Endothelial cell of umbilical vein (primary cell): ENCODE measurements at regions of chr2 and their contacts with region 1.

Region 1: DNA sequence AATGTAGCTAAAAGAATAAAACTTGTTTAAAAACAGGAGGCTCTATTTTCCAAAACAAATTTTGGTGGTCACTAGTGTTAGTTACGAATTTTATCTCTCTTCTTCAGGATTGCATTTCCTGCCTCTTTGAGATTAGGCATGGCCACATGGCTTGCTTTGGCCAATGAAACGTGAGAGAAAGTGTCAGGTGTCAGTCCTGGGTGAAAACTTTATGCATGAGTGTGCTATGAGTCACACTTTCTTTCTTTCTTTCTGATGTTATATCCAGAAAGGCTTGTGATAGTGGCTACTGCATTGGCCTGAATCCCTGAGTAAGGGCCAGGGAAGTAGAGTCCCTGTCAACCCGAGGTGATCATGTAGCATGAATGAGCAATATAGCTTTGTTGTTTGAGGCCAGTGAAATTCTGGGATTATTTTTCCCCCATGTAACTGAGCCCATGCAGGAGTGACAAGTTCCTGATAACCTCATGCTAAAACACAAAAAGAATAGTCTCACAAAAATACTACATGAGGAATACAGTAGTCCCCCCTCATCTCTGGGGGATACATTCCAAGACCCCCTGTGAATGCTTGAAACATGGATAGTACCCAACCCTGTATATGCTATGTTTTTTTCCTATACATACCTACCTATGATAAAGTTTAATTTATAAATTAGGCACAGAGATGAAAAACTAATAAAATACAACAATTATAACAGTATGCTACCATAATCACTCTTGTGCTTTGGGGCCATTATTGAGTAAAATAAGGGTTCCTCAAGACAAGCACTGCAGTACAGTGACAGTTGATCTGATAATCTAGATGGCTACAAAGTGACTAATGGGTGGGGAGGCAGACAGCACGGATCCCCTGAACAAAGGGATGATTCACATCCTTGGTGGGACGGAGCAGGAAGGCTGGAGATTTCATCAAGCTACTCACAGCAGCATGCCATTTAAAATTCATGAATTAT is 109.5 kb downstream of the CDC42EP3 start:
- DNase-seq: peak; percentile 92
- H3K4me3 ChIP-seq: peak overlapping the region in 1 of 3 experiments; percentile 9
- H3K27ac ChIP-seq: peak overlapping the region; percentile 91
- H3K4me1 ChIP-seq: peaks cover 42% of the 10 kb centered on the region
- H3K27me3 ChIP-seq: no peaks in the 10 kb centered on the region
- CTCF ChIP-seq: no peak
- POLR2A ChIP-seq: no peak

Region 2: GRCh38 chr2:36568516-36569246 is 993.2 kb before region 1 on chr2:
- CTCF ChIA-PET with region 1: no interaction called
- POLR2A ChIA-PET with region 1: no interaction called
- dilution Hi-C with region 1: no loop called
- intact Hi-C with region 1: no loop called
- DNase-seq: peak; percentile 95
- H3K4me3 ChIP-seq: peak overlapping the region in 1 of 3 experiments; percentile 42
- H3K27ac ChIP-seq: peak overlapping the region; percentile 98
- H3K4me1 ChIP-seq: peaks cover 91% of the 10 kb centered on the region
- H3K27me3 ChIP-seq: no peaks in the 10 kb centered on the region
- CTCF ChIP-seq: no peak
- POLR2A ChIP-seq: peak; percentile 61

Region 3: GRCh38 chr2:37449761-37450296 is 112.1 kb before region 1 on chr2:
- CTCF ChIA-PET with region 1: no interaction called
- POLR2A ChIA-PET with region 1: interaction called, 11 read pairs
- dilution Hi-C with region 1: no loop called
- intact Hi-C with region 1: loop called (anchors 1 kb)
- DNase-seq: peak; percentile 67
- H3K4me3 ChIP-seq: no peak overlapping the region
- H3K27ac ChIP-seq: no peak overlapping the region
- H3K4me1 ChIP-seq: peaks cover 28% of the 10 kb centered on the region
- H3K27me3 ChIP-seq: no peaks in the 10 kb centered on the region
- CTCF ChIP-seq: no peak
- POLR2A ChIP-seq: no peak

Region 4: DNA sequence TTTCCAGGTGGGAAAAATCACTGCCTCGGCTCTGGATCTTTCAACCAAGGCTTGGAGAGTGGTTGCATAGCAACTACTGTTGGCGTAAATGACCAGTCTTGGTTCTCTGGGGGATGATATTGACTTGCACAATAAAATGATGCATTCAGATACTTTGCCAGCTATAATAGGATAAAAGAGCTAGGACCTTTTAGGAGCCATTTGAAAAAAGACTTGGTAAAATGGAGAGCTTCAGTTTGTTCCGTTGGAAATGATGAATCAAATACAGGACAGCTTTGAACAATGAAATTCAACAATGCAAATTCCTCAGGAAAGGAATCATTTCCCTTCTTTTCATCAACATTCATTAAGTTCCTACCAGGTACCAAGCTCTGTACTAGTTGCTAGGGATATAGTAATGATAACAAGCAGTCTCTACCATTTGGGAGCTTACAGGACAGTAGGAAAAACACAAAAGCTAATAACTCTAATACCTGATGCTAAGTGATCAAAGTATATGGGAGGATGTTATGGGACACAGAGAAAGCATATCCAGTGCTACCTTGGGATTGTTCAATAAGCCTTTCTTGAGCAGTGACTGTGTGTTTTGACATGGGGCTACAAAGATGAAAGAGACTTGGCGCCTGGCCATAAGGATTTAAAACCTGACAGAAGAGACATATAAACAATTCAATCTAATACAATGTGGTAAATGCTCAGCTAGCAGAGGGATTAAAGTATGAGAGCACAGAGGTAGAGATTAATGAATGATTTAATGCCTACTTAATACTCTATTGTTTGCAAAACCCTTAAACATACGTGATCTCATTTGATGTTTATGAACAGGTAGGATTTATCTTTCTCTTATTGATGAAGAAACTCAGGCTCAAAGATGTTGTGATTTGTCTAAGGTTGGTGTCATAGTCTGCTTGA is 106.8 kb before region 1 on chr2:
- CTCF ChIA-PET with region 1: no interaction called
- POLR2A ChIA-PET with region 1: interaction called, 11 read pairs
- dilution Hi-C with region 1: no loop called
- intact Hi-C with region 1: loop called (anchors 1 kb)
- DNase-seq: peak; percentile 95
- H3K4me3 ChIP-seq: no peak overlapping the region
- H3K27ac ChIP-seq: peak overlapping the region; percentile 99
- H3K4me1 ChIP-seq: peaks cover 67% of the 10 kb centered on the region
- H3K27me3 ChIP-seq: no peaks in the 10 kb centered on the region
- CTCF ChIP-seq: no peak
- POLR2A ChIP-seq: peak; percentile 9

Region 5: DNA sequence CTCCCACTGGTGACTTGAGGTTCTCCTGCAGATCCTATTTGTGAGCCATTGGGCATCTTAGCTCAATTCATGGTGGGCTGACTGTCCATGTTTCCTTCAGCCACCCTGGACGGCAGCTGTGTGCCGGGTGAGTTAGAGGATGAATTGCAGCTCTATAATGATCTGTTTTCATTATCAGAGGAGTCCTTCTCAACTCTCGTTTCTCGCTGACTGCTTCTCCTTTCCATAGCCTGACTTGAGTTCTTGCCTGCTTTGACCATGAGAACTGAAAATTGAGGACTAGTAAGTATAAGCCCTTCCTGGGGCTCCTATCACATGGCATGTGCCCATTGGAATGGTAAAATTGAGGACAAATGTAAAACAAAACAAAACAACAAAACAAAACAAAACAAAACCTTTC is 12.3 kb before region 1 on chr2:
- CTCF ChIA-PET with region 1: no interaction called
- POLR2A ChIA-PET with region 1: no interaction called
- dilution Hi-C with region 1: no loop called
- intact Hi-C with region 1: loop called (anchors 1 kb)
- DNase-seq: no peak
- H3K4me3 ChIP-seq: no peak overlapping the region
- H3K27ac ChIP-seq: no peak overlapping the region
- H3K4me1 ChIP-seq: no peaks in the 10 kb centered on the region
- H3K27me3 ChIP-seq: no peaks in the 10 kb centered on the region
- CTCF ChIP-seq: no peak
- POLR2A ChIP-seq: no peak

Region 6: DNA sequence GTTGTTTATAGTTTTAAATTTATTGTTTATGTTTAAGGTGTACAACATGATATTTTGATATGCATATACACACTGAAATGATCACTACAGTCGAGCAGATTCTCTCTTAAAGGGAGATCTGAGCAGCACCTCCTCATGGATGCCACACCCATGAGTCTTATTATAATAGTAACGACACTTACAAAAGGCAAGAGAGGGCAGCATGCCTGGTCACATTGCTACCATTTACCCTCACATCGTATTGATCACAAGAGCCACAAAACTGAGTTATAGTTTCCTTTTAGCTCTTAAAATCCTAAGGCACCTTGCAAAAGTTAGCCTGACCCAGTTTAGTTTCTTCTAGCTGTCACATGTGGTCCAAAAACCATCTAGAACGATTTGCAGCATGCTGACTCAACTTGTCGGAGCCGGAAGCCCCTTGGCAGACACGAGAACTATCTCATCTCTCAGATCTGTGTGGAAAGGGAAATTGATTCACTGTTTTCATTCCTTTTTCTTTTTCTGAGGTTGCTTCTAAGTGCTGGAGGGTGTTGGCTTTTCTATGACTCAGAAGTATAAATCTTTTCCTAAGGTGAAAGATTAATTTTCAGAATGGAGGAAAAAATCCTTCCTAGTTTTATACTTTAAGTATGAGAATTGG is 24.2 kb after region 1 on chr2:
- CTCF ChIA-PET with region 1: interaction called, 11 read pairs
- POLR2A ChIA-PET with region 1: no interaction called
- dilution Hi-C with region 1: no loop called
- intact Hi-C with region 1: loop called (anchors 1 kb)
- DNase-seq: peak; percentile 96
- H3K4me3 ChIP-seq: no peak overlapping the region
- H3K27ac ChIP-seq: peak overlapping the region; percentile 75
- H3K4me1 ChIP-seq: peaks cover 88% of the 10 kb centered on the region
- H3K27me3 ChIP-seq: no peaks in the 10 kb centered on the region
- CTCF ChIP-seq: no peak
- POLR2A ChIP-seq: no peak

Region 7: DNA sequence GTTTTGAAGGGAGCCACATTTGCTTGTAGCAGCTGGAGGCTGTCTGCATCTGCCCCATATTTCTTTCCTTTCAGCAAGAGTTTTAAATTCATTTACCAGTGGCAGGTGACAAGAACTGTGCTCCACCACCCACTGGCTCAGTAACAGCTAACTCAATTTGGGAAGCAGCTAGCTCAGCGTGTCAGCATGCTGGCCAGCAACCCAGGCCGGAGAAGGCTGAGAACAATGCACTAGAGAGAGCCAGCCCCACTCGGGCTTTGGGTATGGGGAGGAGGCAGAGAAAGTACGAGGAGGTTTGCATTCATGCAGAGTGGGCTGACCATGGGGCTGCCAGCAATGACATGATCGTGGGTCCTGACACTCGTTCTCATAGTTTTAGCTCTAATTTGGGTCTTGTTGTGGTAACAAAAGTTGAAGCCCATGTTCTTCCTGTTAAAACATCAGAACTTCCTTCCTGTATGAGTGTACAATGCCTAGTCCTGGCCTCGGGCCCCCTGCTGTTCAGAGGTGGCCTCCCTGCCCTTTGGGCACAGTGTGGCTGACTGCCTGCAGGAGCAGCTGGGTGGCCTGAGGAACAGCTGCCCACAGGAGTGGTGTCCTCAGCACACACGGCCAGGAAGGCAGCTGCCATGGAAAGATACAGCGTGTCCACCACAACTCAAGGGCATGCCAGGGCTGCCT is 86.6 kb after region 1 on chr2:
- CTCF ChIA-PET with region 1: interaction called, 3 read pairs
- POLR2A ChIA-PET with region 1: no interaction called
- dilution Hi-C with region 1: no loop called
- intact Hi-C with region 1: loop called (anchors 1 kb)
- DNase-seq: peak; percentile 80
- H3K4me3 ChIP-seq: no peak overlapping the region
- H3K27ac ChIP-seq: peak overlapping the region; percentile 68
- H3K4me1 ChIP-seq: peaks cover 80% of the 10 kb centered on the region
- H3K27me3 ChIP-seq: no peaks in the 10 kb centered on the region
- CTCF ChIP-seq: peak; percentile 33 to 41
- POLR2A ChIP-seq: no peak

Region 8: GRCh38 chr2:37653805-37654378 is 92.0 kb after region 1 on chr2:
- CTCF ChIA-PET with region 1: interaction called, 3 read pairs
- POLR2A ChIA-PET with region 1: no interaction called
- dilution Hi-C with region 1: no loop called
- intact Hi-C with region 1: loop called (anchors 1 kb)
- DNase-seq: no peak
- H3K4me3 ChIP-seq: no peak overlapping the region
- H3K27ac ChIP-seq: peak overlapping the region; percentile 97
- H3K4me1 ChIP-seq: peaks cover 79% of the 10 kb centered on the region
- H3K27me3 ChIP-seq: no peaks in the 10 kb centered on the region
- CTCF ChIP-seq: no peak
- POLR2A ChIP-seq: peak; percentile 6